MCF 10A (cell line): ENCODE measurements at regions of chr5 and their contacts with region 1.

Region 1: GRCh38 chr5:105145152-105145551 is 1582.6 kb upstream of the NUDT12 start:
- DNase-seq: no peak
- H3K4me3 Mint-ChIP-seq: no peak overlapping the region
- H3K27ac Mint-ChIP-seq: no peak overlapping the region
- H3K4me1 Mint-ChIP-seq: no peaks in the 10 kb centered on the region
- H3K27me3 Mint-ChIP-seq: no peaks in the 10 kb centered on the region
- CTCF ChIP-seq: no peak

Region 2: GRCh38 chr5:105163547-105163946 is 18.4 kb after region 1 on chr5:
- CTCF ChIA-PET with region 1: no interaction called
- POLR2A ChIA-PET with region 1: no interaction called
- intact Hi-C with region 1: loop called (anchors 2 kb)
- DNase-seq: no peak
- H3K4me3 Mint-ChIP-seq: no peak overlapping the region
- H3K27ac Mint-ChIP-seq: no peak overlapping the region
- H3K4me1 Mint-ChIP-seq: no peaks in the 10 kb centered on the region
- H3K27me3 Mint-ChIP-seq: no peaks in the 10 kb centered on the region
- CTCF ChIP-seq: no peak